K562 (cell line): ENCODE measurements at regions of chr3 and their contacts with region 1.

Region 1: DNA sequence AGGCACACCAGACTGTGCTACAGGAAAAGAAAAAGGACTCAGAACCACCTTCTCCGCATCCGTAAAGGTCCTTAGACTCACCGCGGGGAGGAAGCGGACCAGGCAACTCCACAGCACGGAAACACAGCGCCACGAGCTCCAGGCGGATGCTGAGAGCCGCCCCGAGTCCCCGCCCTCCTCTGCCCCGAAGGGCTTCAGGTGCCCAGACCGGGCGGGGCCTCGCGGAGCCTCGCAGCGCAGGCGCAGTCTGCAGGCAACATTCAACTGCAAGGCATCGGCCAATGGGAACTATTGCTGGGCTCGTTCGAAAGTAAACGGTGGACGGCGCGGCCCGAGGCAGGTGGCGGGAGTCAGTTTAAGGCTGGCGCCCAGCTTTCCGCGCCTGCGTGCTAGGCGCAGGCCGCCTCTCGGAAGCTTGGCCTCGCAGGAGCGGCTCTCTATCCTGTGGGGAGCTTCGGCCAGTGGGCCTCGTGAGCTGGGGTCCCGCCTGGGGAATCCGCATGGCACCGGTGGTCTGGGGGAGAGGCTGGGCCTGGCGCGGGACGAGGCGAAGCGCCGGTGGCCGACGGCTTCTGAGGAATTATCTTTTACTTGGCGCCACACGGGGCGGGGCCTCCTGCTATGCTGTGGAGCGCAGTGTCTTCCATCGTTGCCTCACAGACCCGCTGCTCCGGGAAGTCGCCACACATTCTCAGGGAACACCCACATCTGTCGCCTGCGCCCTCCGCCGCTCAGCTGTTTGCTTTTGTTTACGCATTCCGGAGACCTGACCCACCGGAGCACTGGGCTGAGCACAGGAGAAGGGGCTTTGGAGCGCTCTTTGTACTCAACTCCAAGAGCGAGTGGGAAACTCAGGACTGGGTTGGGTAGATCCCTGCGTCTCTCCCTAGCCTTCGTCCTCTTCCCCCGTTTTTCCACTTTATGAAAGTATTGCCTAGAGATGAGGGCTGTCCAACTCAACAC is at the start of gene TRIM59:
- DNase-seq: peak; percentile 97 to 99 (median 98)
- ATAC-seq: peak; percentile 86
- H3K4me3 ChIP-seq: peak within 1 kb of the TSS; percentile 67
- H3K27ac ChIP-seq: peak within 1 kb of the TSS; percentile 98
- H3K4me1 ChIP-seq: peaks cover 18 to 39% of the 10 kb centered on the region in 2 experiments
- H3K27me3 ChIP-seq: no peaks in the 10 kb centered on the region
- CTCF ChIP-seq: peak; percentile 5 to 21 (median 9); a peak in 2 of 6 replicates
- EP300 ChIP-seq: 0 out of 2 replicates have a peak, but pooled peaks have one; percentile 37
- POLR2A ChIP-seq: peak; percentile 95
- RAD21 ChIP-seq: no peak
- polyA plus RNA-seq, gene TRIM59: 34.1 to 101 TPM

Region 2: GRCh38 chr3:159884661-159885402 is 565.1 kb before region 1 on chr3:
- CTCF ChIA-PET with region 1: no interaction called
- POLR2A ChIA-PET with region 1: no interaction called
- in situ Hi-C with region 1: loop called (anchors 25 kb)
- intact Hi-C with region 1: no loop called
- DNase-seq: peak; percentile 11 to 18 (median 16)
- ATAC-seq: peak; percentile 70
- H3K4me3 ChIP-seq: no peak overlapping the region
- H3K27ac ChIP-seq: no peak overlapping the region
- H3K4me1 ChIP-seq: no peaks in the 10 kb centered on the region
- H3K27me3 ChIP-seq: 0 out of 5 replicates have a peak, but pooled peaks cover 0 to 3% of the 10 kb centered on the region in 2 experiments
- CTCF ChIP-seq: peak; percentile 15 to 61 (median 38); a peak in 4 of 6 replicates
- EP300 ChIP-seq: no peak
- POLR2A ChIP-seq: no peak
- RAD21 ChIP-seq: peak; percentile 43 to 61; a peak in 3 of 4 replicates

Region 3: DNA sequence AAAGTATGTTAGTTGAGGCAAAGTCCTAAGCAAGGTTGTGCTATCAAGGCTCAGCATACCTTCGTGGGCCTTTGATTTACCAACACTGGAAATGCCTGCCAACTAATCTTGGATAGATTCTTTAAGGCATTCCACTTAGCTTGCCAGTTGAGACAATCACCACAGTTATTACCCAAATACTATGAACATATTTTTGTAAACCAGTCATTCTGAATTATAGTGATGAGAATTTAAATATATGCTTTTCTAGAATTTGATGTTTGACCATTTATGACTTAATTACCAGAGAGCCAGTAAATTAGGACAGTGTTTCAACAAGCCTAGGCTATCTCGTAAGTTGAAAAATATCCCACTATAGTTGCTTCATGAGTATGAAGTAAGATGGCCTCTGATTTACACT is 15.8 kb before region 1 on chr3:
- CTCF ChIA-PET with region 1: no interaction called
- POLR2A ChIA-PET with region 1: interaction called, 38 read pairs
- in situ Hi-C with region 1: no loop called
- intact Hi-C with region 1: no loop called
- DNase-seq: no peak
- ATAC-seq: peak; percentile 4; the same call in 2 of the 3 replicates
- H3K4me3 ChIP-seq: no peak overlapping the region
- H3K27ac ChIP-seq: no peak overlapping the region
- H3K4me1 ChIP-seq: peaks cover 2 to 3% of the 10 kb centered on the region in 2 experiments; a peak in 2 of 5 replicates
- H3K27me3 ChIP-seq: no peaks in the 10 kb centered on the region
- CTCF ChIP-seq: no peak
- EP300 ChIP-seq: no peak
- POLR2A ChIP-seq: peak; percentile 41; the same call in 1 of the 2 replicates
- RAD21 ChIP-seq: no peak

Region 4: GRCh38 chr3:160473978-160474377 is 24.1 kb after region 1 on chr3:
- CTCF ChIA-PET with region 1: no interaction called
- POLR2A ChIA-PET with region 1: interaction called, 20 read pairs
- in situ Hi-C with region 1: no loop called
- intact Hi-C with region 1: no loop called
- DNase-seq: no peak
- ATAC-seq: no peak
- H3K4me3 ChIP-seq: no peak overlapping the region
- H3K27ac ChIP-seq: no peak overlapping the region
- H3K4me1 ChIP-seq: peaks cover 0 to 3% of the 10 kb centered on the region in 2 experiments; a peak in 1 of 5 replicates
- H3K27me3 ChIP-seq: no peaks in the 10 kb centered on the region
- CTCF ChIP-seq: no peak
- EP300 ChIP-seq: no peak
- POLR2A ChIP-seq: no peak
- RAD21 ChIP-seq: no peak

Region 5: DNA sequence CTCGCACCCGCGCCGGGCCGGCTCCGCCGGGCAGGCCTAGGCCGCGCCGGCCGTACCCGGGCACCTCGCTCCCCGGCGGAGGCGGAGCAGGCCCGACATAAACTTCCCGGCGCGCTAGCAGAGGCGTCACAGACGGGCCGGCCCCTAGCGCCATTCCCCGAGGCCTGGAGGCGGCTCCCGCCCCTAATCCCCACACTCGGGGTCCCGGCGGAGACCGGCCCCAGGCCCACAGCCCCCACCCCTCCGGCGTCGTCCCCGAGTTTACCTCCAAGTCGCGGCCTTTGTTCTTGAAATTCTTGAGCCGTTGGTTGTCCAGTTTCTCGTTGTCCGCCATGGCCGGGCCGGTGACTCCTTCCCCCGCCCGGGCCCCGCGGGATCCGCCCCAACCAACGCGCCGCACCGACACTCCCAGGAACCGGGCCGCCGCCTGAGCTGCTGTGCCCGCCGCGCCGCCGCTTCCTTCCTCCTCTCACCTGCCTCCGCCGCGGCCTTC is 115.1 kb after region 1 on chr3:
- CTCF ChIA-PET with region 1: no interaction called
- POLR2A ChIA-PET with region 1: no interaction called
- in situ Hi-C with region 1: no loop called
- intact Hi-C with region 1: loop called (anchors 5 kb)
- DNase-seq: peak in 3 of 4 experiments; percentile 58 to 71 (median 62)
- ATAC-seq: peak; percentile 79
- H3K4me3 ChIP-seq: peak overlapping the region; percentile 67
- H3K27ac ChIP-seq: peak overlapping the region; percentile 85
- H3K4me1 ChIP-seq: peaks cover 13 to 17% of the 10 kb centered on the region in 2 experiments; a peak in 4 of 5 replicates
- H3K27me3 ChIP-seq: no peaks in the 10 kb centered on the region
- CTCF ChIP-seq: no peak
- EP300 ChIP-seq: no peak
- POLR2A ChIP-seq: no peak
- RAD21 ChIP-seq: no peak

Region 6: GRCh38 chr3:160771811-160772459 is 322.0 kb after region 1 on chr3:
- CTCF ChIA-PET with region 1: no interaction called
- POLR2A ChIA-PET with region 1: no interaction called
- in situ Hi-C with region 1: no loop called
- intact Hi-C with region 1: no loop called
- DNase-seq: no peak
- ATAC-seq: no peak
- H3K4me3 ChIP-seq: no peak overlapping the region
- H3K27ac ChIP-seq: no peak overlapping the region
- H3K4me1 ChIP-seq: no peaks in the 10 kb centered on the region
- H3K27me3 ChIP-seq: no peaks in the 10 kb centered on the region
- CTCF ChIP-seq: no peak
- EP300 ChIP-seq: no peak
- POLR2A ChIP-seq: no peak
- RAD21 ChIP-seq: no peak